PC-3 (cell line): ENCODE measurements at regions of chr17 and their contacts with region 1.

Region 1: DNA sequence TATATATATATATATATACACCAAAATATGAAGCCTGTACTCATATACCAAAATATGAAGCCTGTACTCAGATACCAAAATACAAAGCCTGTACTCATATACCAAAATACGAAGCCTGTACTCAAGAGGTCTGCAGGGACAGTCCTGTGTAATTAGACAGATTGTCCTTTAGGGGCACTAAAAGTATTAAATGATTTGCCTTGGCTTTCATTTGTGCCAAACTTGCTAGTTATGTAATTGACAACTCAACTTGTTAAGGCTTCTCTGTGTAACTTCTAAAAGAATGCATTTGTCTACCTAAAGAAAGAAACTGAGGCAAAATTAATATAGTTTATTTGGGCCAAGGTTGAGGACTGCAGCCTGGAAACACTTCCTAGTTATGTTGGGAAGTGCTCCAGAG is 30.8 kb upstream of the DHX40 start:
- DNase-seq: peak; percentile 46
- ATAC-seq: peak; percentile 78; the same call in 1 of the 2 replicates
- H3K4me3 ChIP-seq: no peak overlapping the region
- H3K27ac ChIP-seq: no peak overlapping the region
- H3K4me1 ChIP-seq: no peaks in the 10 kb centered on the region
- H3K27me3 ChIP-seq: peaks cover 17% of the 10 kb centered on the region
- CTCF ChIP-seq: peak; percentile 45

Region 2: GRCh38 chr17:59487161-59487873 is 47.3 kb before region 1 on chr17:
- CTCF ChIA-PET with region 1: no interaction called
- POLR2A ChIA-PET with region 1: no interaction called
- intact Hi-C with region 1: no loop called
- DNase-seq: no peak
- ATAC-seq: no peak
- H3K4me3 ChIP-seq: no peak overlapping the region
- H3K27ac ChIP-seq: no peak overlapping the region
- H3K4me1 ChIP-seq: no peaks in the 10 kb centered on the region
- H3K27me3 ChIP-seq: peaks cover 16% of the 10 kb centered on the region; the same call in 1 of the 2 replicates
- CTCF ChIP-seq: no peak

Region 3: DNA sequence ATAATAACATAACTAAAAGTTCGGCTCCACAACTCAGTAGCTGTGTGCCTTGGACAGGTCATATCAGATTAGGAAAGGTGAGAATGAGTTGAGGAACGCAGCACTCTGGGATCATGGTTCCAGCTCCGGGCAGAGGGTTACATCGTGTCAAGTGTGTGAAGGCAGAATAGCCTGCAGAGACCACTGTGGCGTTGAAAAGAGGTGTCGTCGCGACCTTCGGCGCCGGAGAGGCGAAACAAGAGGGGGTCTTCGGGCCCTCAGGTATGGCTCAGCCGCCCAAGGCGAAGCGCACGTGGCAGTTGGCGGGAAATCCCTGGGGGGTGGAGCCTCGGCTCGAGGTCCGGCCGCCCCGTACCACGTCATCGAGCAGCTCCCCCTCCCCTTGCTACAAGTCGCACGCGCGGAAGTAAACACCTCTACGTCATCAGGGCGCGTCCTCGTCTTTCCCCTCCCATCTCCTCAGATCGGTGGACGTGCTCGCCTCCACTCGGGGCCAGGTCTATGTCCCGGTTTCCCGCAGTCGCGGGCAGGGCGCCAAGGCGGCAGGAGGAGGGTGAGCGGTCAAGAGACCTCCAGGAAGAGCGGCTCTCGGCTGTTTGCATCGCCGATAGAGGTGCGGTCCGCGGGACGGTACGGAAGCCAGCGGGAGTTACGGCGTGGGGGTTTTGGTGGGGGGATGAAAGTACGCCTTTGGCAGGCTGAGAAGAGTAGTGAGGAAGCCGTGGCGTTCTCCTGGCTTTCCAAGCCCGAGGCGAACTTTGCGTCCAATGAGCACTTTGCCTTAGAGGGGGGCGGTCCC is 30.8 kb after region 1 on chr17 and contains the start of gene DHX40:
- CTCF ChIA-PET with region 1: interaction called, 10 read pairs
- POLR2A ChIA-PET with region 1: no interaction called
- intact Hi-C with region 1: no loop called
- DNase-seq: peak; percentile 91
- ATAC-seq: peak; percentile 82
- H3K4me3 ChIP-seq: peak within 1 kb of the TSS; percentile 95
- H3K27ac ChIP-seq: no peak within 1 kb of the TSS; the same call in 1 of the 2 replicates
- H3K4me1 ChIP-seq: peaks cover 8% of the 10 kb centered on the region
- H3K27me3 ChIP-seq: no peaks in the 10 kb centered on the region
- CTCF ChIP-seq: no peak
- total RNA-seq, gene DHX40: 36.6 and 38.9 TPM in 2 replicates

Region 4: GRCh38 chr17:59601130-59601529 is 66.5 kb after region 1 on chr17:
- CTCF ChIA-PET with region 1: no interaction called
- POLR2A ChIA-PET with region 1: no interaction called
- intact Hi-C with region 1: no loop called
- DNase-seq: no peak
- ATAC-seq: no peak
- H3K4me3 ChIP-seq: no peak overlapping the region
- H3K27ac ChIP-seq: no peak overlapping the region
- H3K4me1 ChIP-seq: no peaks in the 10 kb centered on the region
- H3K27me3 ChIP-seq: no peaks in the 10 kb centered on the region
- CTCF ChIP-seq: no peak